ENCODE measurements at regions of chr2 and their contacts with region 1.

Region 1: DNA sequence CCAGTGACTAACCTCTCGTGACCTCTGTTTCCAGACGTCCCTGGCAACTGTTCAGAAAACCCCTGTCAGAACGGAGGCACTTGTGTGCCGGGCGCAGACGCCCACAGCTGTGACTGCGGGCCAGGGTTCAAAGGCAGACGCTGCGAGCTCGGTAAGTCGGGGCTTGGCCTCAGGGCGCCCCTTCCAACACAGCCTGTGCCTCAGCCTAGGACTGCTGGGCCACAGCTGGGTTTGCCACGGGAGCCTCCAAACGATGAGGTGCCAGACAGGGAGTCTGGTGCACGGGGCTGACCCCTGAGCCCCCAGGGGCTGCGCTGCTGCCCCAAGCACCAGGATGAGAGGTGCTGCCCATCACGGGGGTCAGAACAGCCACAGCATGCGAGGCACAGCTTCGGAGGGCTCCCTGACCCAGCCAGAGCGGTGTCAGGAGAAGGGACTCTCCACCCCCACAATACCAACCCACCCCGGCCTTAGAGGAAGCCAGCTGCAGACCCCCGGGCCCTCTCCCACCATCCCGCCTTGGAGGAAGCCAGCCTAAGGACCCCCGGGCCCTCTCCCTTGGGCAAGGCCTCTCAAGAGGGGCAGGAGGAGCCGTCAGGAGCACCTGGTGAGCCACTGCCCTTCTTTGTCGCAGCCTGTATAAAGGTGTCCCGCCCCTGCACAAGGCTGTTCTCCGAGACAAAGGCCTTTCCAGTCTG is 20.3 kb downstream of the MTERF4 start:
- DNase-seq: no peak
- ATAC-seq: no peak
- H3K4me3 ChIP-seq: no peak overlapping the region
- H3K4me3 Mint-ChIP-seq: no peak overlapping the region
- H3K27ac ChIP-seq: no peak overlapping the region
- H3K27ac Mint-ChIP-seq: peak overlapping the region in 1 of 2 donors; percentile 69
- H3K4me1 ChIP-seq: peaks cover 0 to 14% of the 10 kb centered on the region in 2 experiments
- H3K4me1 Mint-ChIP-seq: peaks cover 11 to 32% (median 25%) of the 10 kb centered on the region in 3 donors
- H3K27me3 ChIP-seq: no peaks in the 10 kb centered on the region
- H3K27me3 Mint-ChIP-seq: no peaks in the 10 kb centered on the region

Region 2: DNA sequence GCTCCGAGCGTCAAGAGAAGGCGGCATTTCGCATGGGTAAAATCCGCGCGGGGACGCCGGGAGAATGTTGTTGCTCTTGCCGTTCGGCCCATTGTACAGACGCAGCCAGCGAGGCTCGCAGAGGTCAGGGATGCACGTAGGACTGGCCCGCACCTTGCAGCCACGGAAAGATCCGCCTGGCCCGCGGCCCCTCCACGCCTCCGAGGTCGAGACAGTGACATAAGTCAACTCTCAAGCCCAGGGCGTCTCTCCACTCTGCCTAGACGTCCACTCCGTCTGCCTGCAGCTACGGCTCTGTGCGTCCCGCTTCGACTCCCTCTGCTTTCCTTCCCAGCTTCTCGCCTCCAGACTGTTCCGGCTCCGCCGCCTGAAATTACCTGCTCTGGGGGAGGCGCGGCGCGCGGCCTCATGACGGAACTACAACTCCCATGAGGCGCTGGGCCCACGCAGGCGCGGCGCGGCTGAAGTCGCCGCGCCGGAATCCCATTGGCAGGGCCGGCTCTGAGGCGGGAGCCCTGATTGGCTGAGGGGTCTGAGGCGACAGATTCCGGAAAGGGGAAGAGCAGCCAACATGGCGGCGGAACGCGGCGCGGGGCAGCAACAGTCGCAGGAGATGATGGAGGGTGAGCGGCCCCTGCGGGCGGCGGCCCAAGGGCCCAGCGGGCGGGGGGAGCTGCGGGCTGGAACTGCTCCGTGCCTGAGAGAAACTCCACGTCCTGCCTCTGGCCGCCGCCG is 68.3 kb after region 1 on chr2 and contains the start of gene PPP1R7:
- CTCF ChIA-PET with region 1: interaction called, 5 to 31 read pairs
- POLR2A ChIA-PET with region 1: interaction called in 1 of 2 experiments, 3 read pairs
- DNase-seq: peak; percentile 87 to 97 (median 95)
- ATAC-seq: peak; percentile 81 to 83 (median 82)
- H3K4me3 ChIP-seq: peak within 1 kb of the TSS; percentile 86 to 92
- H3K4me3 Mint-ChIP-seq: peak within 1 kb of the TSS; percentile 97 to 100 (median 99)
- H3K27ac ChIP-seq: peak within 1 kb of the TSS; percentile 44
- H3K27ac Mint-ChIP-seq: peak within 1 kb of the TSS; percentile 93 to 95
- H3K4me1 ChIP-seq: peaks cover 9 to 22% of the 10 kb centered on the region in 2 experiments
- H3K4me1 Mint-ChIP-seq: peaks cover 42 to 52% (median 50%) of the 10 kb centered on the region in 3 donors
- H3K27me3 ChIP-seq: no peaks in the 10 kb centered on the region
- H3K27me3 Mint-ChIP-seq: no peaks in the 10 kb centered on the region
- total RNA-seq, gene PPP1R7: 46.6 to 61.2 (median 53.8) TPM

Measured in T-cell (primary cell).